CD8-positive, alpha-beta T cell (primary cell): ENCODE measurements at regions of chr2 and their contacts with region 1.

Region 1: DNA sequence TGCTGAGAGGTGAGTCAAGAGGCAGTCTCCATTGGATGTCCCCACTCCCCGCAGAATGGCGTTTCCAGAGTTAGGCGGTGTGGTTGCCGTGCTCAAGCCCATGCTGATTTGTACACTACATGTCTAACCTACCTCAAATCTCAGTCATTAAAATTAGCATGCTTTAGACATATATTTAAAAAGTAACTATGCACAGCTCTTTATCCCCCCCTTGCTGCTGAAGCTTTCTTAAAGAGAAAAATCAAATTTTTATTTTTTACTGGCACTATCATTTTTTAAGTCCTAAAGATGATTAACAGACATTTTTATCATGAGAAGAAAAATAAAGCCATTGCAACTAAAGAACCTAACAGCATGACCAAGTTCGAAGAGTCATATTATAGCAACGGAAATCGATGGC is 42.9 kb downstream of the BOLA3 start:
- DNase-seq: peak in 1 of 9 experiments; percentile 30
- ATAC-seq: peak; percentile 40
- H3K4me3 ChIP-seq: no peak overlapping the region
- H3K4me3 Mint-ChIP-seq: no peak overlapping the region
- H3K27ac ChIP-seq: no peak overlapping the region
- H3K27ac Mint-ChIP-seq: no peak overlapping the region
- H3K4me1 ChIP-seq: no peaks in the 10 kb centered on the region
- H3K4me1 Mint-ChIP-seq: no peaks in the 10 kb centered on the region
- H3K27me3 ChIP-seq: no peaks in the 10 kb centered on the region
- H3K27me3 Mint-ChIP-seq: no peaks in the 10 kb centered on the region
- CTCF ChIP-seq: peak; percentile 26

Region 2: DNA sequence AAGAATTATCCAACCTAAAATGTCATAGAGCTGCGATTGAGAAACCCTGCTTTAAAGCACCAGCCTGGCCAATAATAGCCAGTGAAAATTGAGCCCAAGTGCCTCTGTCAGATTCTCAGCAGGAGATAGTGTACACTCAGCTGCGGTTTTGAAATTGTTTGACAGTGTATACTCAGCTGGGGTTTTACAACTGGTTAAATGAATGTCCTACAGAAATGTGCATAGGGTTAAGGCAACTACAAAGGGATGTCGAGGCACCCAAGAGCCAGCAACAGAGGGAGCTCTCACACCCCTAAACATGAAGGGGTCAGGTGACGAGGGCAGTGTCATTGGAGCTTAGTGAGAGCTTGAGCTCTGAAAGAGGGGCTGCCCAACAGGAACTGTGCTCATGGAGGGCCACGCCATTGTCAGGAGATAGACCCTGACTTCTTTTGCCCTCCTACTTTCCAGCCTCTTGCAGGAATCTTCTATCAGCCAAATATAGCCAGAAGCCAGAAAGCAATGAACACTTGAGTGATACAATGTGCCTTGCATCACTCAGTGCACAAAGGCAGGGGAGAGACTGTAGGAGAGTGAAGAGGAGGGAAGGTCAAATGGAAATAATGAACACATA is 196.9 kb before region 1 on chr2:
- CTCF ChIA-PET with region 1: interaction called, 10 read pairs
- POLR2A ChIA-PET with region 1: no interaction called
- intact Hi-C with region 1: loop called (anchors 1 to 5 kb)
- DNase-seq: peak; percentile 19 to 79 (median 61)
- ATAC-seq: peak; percentile 90
- H3K4me3 ChIP-seq: no peak overlapping the region
- H3K4me3 Mint-ChIP-seq: no peak overlapping the region
- H3K27ac ChIP-seq: no peak overlapping the region
- H3K27ac Mint-ChIP-seq: peak overlapping the region; percentile 7
- H3K4me1 ChIP-seq: no peaks in the 10 kb centered on the region
- H3K4me1 Mint-ChIP-seq: peaks cover 3% of the 10 kb centered on the region
- H3K27me3 ChIP-seq: no peaks in the 10 kb centered on the region
- H3K27me3 Mint-ChIP-seq: no peaks in the 10 kb centered on the region
- CTCF ChIP-seq: peak; percentile 44

Region 3: DNA sequence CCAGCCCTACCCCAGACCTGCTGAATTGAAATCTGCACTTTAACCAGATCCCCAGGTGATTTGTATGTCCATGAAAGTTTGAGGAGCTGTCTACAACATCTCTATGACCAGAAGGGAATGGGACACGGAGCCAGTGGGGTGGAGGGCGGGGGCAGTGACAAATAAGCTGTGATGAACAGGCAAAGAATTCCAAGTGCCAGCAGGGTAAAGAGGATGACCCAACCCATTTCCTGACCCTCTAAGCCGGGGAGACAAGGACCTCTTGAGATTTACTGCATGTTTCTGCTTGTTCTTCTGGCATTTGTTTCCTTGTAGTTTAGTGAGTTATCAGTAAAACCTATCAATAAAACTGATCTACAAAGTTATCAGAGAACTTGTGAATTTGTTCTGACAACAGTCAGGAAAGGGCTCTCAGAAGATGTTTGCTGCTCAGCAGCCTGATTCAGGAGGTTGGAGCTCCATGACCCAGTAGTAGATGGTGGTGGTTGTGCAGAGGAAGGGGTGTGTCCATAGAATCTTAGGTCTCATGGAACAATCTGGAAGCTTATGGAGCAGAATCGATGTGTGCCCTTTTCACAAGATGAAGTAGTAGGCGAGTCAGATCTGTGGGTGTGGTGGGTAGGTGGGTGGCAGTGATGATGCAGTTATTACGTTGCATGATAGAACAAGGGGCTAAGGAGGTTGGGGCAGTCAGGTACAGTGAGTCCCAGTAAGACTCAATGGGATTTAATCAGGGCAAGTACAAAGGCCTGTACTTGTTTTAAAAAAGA is 111.3 kb before region 1 on chr2:
- CTCF ChIA-PET with region 1: no interaction called
- POLR2A ChIA-PET with region 1: no interaction called
- intact Hi-C with region 1: no loop called
- DNase-seq: no peak
- ATAC-seq: no peak
- H3K4me3 ChIP-seq: no peak overlapping the region
- H3K4me3 Mint-ChIP-seq: no peak overlapping the region
- H3K27ac ChIP-seq: no peak overlapping the region
- H3K27ac Mint-ChIP-seq: peak overlapping the region; percentile 46
- H3K4me1 ChIP-seq: peaks cover 71% of the 10 kb centered on the region
- H3K4me1 Mint-ChIP-seq: peaks cover 79% of the 10 kb centered on the region
- H3K27me3 ChIP-seq: no peaks in the 10 kb centered on the region
- H3K27me3 Mint-ChIP-seq: no peaks in the 10 kb centered on the region
- CTCF ChIP-seq: no peak

Region 4: DNA sequence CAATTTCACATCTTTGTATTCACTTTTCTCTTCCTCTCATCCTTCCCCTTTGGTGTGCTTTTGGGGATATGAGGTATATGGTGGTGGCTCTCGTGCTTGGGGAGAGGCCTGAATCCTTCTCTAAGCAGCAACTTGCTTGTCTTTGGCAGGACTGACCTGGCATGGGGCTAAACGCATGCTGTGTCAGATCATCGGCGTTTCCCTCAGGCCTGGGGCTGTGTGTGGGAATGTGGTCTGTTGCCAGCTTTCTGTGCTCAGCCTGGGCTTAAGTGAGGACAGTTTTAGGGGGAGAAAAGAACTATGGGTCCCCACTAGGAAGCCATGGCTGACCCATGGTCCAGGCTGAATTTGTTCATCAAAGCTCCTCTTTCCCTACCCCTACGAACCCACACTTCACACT is 59.4 kb before region 1 on chr2:
- CTCF ChIA-PET with region 1: no interaction called
- POLR2A ChIA-PET with region 1: no interaction called
- intact Hi-C with region 1: no loop called
- DNase-seq: no peak
- ATAC-seq: no peak
- H3K4me3 ChIP-seq: no peak overlapping the region
- H3K4me3 Mint-ChIP-seq: no peak overlapping the region
- H3K27ac ChIP-seq: no peak overlapping the region
- H3K27ac Mint-ChIP-seq: peak overlapping the region; percentile 49
- H3K4me1 ChIP-seq: peaks cover 15% of the 10 kb centered on the region
- H3K4me1 Mint-ChIP-seq: peaks cover 43% of the 10 kb centered on the region
- H3K27me3 ChIP-seq: no peaks in the 10 kb centered on the region
- H3K27me3 Mint-ChIP-seq: no peaks in the 10 kb centered on the region
- CTCF ChIP-seq: no peak

Region 5: GRCh38 chr2:74079522-74080341 is 25.1 kb before region 1 on chr2:
- CTCF ChIA-PET with region 1: no interaction called
- POLR2A ChIA-PET with region 1: no interaction called
- intact Hi-C with region 1: no loop called
- DNase-seq: no peak
- ATAC-seq: no peak
- H3K4me3 ChIP-seq: no peak overlapping the region
- H3K4me3 Mint-ChIP-seq: no peak overlapping the region
- H3K27ac ChIP-seq: no peak overlapping the region
- H3K27ac Mint-ChIP-seq: no peak overlapping the region
- H3K4me1 ChIP-seq: no peaks in the 10 kb centered on the region
- H3K4me1 Mint-ChIP-seq: peaks cover 2% of the 10 kb centered on the region
- H3K27me3 ChIP-seq: no peaks in the 10 kb centered on the region
- H3K27me3 Mint-ChIP-seq: no peaks in the 10 kb centered on the region
- CTCF ChIP-seq: no peak

Region 6: GRCh38 chr2:74472086-74472944 is 367.5 kb after region 1 on chr2 and contains the start of gene MRPL53:
- CTCF ChIA-PET with region 1: no interaction called
- POLR2A ChIA-PET with region 1: no interaction called
- intact Hi-C with region 1: no loop called
- DNase-seq: peak; percentile 90 to 99 (median 98)
- ATAC-seq: peak; percentile 89
- H3K4me3 ChIP-seq: peak within 1 kb of the TSS; percentile 69 to 95
- H3K4me3 Mint-ChIP-seq: peak within 1 kb of the TSS; percentile 97
- H3K27ac ChIP-seq: peak within 1 kb of the TSS; percentile 78 to 94
- H3K27ac Mint-ChIP-seq: peak within 1 kb of the TSS; percentile 99
- H3K4me1 ChIP-seq: peaks cover 21% of the 10 kb centered on the region
- H3K4me1 Mint-ChIP-seq: peaks cover 23% of the 10 kb centered on the region
- H3K27me3 ChIP-seq: no peaks in the 10 kb centered on the region
- H3K27me3 Mint-ChIP-seq: no peaks in the 10 kb centered on the region
- CTCF ChIP-seq: no peak
- total RNA-seq, gene MRPL53: 48.6 to 59.0 TPM